Cardiac septum (tissue), 1 donor: ENCODE measurements at regions of chr12 and their contacts with region 1.

Region 1: GRCh38 chr12:6124411-6125309 is at the start of gene VWF:
- DNase-seq: no peak
- total RNA-seq, gene VWF: 350 TPM

Region 2: DNA sequence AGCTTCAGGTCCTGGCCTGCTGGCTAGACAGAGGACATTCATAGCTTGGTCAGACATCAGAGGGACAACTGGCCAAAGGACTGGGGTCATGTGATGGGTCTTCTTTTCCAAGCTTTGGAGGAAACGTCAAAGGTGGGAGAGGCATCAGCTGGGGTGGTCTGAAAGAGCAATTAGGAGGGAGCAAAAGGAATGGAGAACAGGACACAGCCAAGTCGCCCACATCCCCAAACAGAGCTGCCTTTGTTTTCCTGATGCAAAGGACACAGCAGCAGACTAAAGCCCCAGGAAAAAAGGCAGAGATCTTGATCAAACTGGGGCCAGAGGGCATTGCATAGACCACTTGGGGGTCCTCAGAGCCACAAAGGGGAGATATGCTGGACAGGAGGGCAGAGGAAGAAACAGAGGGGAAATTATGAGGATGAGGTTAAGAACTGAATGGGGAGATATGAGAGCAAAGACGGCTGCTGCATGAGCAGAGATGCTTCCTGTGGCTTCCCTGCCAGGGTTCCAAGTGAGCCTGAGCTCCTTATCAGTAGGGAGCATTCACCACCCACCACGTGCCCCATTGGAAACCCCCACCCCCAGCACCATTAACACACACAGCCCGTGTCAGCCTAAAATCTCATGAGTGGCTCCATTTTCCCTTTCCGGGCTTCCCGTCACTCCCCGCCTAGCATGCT is 242.0 kb before region 1 on chr12:
- intact Hi-C with region 1: no loop called
- DNase-seq: no peak

Region 3: GRCh38 chr12:6074979-6075585 is 49.6 kb before region 1 on chr12:
- intact Hi-C with region 1: loop called (anchors 5 kb)
- DNase-seq: no peak